ENCODE measurements at regions of chr3 and their contacts with region 1.

Region 1: DNA sequence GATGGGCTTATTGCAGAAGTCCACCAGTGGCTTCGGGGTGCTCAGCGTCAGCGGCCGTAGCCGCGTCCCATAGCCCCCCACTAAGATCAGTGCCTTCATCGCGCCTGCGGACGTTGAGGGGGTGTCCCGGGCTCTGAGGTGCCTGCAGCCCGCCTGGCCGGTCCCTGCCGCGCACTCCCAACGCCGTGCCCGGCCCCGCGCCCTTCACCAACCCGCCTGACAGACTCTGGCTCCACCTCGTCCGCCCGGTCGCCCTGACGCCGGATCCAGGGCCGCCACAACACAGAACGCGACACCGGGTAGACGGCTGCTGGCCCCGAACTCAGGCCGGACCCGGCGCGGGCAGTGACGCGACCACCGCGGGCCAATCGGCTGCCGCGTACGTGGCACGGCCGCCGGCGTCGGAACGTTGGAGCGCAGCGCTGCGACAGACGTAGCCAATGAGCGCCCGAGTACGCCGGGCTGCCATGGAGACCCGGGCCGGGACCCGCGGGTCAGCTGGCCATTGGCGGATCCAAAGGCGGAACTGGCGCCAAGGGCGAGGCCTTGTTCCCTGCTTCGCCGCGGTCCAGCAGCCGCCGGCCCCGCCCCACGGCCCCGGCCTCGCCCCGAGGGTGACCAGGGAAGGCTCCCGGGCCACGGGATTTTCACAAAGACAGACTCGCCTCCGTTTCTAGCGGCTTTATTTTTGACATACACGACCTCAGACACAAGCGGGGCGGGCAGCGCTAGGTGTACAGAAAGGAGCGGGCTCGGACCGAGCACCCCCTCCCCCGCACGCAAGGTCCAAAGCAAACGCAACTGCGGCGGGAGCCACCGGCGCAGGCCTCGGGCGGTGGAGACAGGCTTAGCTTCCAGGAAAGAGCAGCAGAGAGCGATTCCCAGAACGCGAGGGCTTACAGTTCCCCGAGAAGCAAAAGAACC is at the start of gene GMPPB:
- DNase-seq: peak; percentile 96
- ATAC-seq: peak; percentile 82
- H3K4me3 Mint-ChIP-seq: peak within 1 kb of the TSS; percentile 92
- H3K27ac Mint-ChIP-seq: peak within 1 kb of the TSS; percentile 97
- H3K4me1 Mint-ChIP-seq: peaks cover 21% of the 10 kb centered on the region
- H3K27me3 Mint-ChIP-seq: no peaks in the 10 kb centered on the region
- CTCF ChIP-seq: no peak
- total RNA-seq, gene GMPPB: 34.7 to 35.2 TPM

Region 2: DNA sequence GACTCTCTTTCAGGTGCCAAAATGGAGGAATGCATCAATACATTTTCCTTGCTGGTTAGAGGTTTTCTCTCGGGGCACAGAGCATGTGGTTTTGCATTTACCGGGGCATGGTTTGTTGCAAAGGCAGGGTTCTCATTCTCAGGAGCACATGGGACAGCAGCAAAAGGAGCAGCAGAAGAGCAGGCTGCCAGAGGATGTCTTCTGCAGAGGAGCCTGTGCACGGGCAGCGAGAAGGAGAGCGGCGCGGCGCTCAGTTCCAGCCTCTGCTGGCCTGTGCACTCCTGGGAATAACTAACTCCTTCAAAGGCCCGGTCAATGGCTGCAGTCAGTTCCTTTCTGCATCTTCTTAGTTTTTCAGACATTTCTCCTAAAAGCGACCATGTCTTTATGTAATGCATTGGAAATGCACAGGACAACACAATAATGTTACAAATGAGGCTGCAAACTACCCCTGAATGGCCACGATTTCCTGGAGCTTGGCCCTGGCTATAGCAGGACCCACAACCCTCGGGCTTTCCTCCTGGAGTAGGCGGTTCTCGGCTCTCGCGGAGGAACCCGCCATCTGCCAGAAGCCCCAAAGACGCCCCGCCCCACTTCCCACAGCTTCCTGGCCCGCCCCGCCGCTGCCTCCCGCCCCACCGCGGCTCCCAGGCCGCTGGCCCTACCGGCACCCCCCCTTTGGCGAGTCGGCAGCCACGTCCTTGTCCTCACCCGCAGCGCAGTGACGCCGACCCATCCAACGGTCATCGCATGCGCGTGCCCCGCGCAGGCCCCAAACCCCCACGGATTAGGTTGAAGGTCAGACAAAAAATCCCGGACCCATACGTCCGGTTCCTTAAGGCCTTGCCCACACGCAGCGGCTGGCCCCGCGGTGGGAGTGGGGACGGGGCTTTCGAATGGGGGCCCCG is 447.2 kb before region 1 on chr3 and contains the start of gene C3orf62:
- CTCF ChIA-PET with region 1: no interaction called
- POLR2A ChIA-PET with region 1: no interaction called
- intact Hi-C with region 1: no loop called
- DNase-seq: peak; percentile 86
- ATAC-seq: peak; percentile 88
- H3K4me3 Mint-ChIP-seq: peak within 1 kb of the TSS; percentile 78
- H3K27ac Mint-ChIP-seq: peak within 1 kb of the TSS; percentile 89
- H3K4me1 Mint-ChIP-seq: peaks cover 30% of the 10 kb centered on the region
- H3K27me3 Mint-ChIP-seq: no peaks in the 10 kb centered on the region
- CTCF ChIP-seq: no peak
- total RNA-seq, gene C3orf62: 3.4 to 3.7 TPM

Region 3: GRCh38 chr3:49327485-49327884 is 396.4 kb before region 1 on chr3:
- CTCF ChIA-PET with region 1: no interaction called
- POLR2A ChIA-PET with region 1: no interaction called
- intact Hi-C with region 1: no loop called
- DNase-seq: peak; percentile 9
- ATAC-seq: peak; percentile 27
- H3K4me3 Mint-ChIP-seq: no peak overlapping the region
- H3K27ac Mint-ChIP-seq: no peak overlapping the region
- H3K4me1 Mint-ChIP-seq: peaks cover 2% of the 10 kb centered on the region
- H3K27me3 Mint-ChIP-seq: no peaks in the 10 kb centered on the region
- CTCF ChIP-seq: no peak

Region 4: GRCh38 chr3:49703443-49703927 is 20.4 kb before region 1 on chr3:
- CTCF ChIA-PET with region 1: interaction called, 17 read pairs
- POLR2A ChIA-PET with region 1: interaction called, 40 read pairs
- intact Hi-C with region 1: no loop called
- DNase-seq: peak; percentile 74
- ATAC-seq: peak; percentile 99
- H3K4me3 Mint-ChIP-seq: no peak overlapping the region
- H3K27ac Mint-ChIP-seq: peak overlapping the region; percentile 11
- H3K4me1 Mint-ChIP-seq: no peaks in the 10 kb centered on the region
- H3K27me3 Mint-ChIP-seq: no peaks in the 10 kb centered on the region
- CTCF ChIP-seq: peak; percentile 80

Region 5: GRCh38 chr3:49712631-49713319 is 11.1 kb before region 1 on chr3:
- CTCF ChIA-PET with region 1: interaction called, 3 read pairs
- POLR2A ChIA-PET with region 1: interaction called, 15 read pairs
- intact Hi-C with region 1: no loop called
- DNase-seq: no peak
- ATAC-seq: no peak
- H3K4me3 Mint-ChIP-seq: no peak overlapping the region
- H3K27ac Mint-ChIP-seq: no peak overlapping the region
- H3K4me1 Mint-ChIP-seq: peaks cover 8% of the 10 kb centered on the region
- H3K27me3 Mint-ChIP-seq: no peaks in the 10 kb centered on the region
- CTCF ChIP-seq: no peak

Region 6: DNA sequence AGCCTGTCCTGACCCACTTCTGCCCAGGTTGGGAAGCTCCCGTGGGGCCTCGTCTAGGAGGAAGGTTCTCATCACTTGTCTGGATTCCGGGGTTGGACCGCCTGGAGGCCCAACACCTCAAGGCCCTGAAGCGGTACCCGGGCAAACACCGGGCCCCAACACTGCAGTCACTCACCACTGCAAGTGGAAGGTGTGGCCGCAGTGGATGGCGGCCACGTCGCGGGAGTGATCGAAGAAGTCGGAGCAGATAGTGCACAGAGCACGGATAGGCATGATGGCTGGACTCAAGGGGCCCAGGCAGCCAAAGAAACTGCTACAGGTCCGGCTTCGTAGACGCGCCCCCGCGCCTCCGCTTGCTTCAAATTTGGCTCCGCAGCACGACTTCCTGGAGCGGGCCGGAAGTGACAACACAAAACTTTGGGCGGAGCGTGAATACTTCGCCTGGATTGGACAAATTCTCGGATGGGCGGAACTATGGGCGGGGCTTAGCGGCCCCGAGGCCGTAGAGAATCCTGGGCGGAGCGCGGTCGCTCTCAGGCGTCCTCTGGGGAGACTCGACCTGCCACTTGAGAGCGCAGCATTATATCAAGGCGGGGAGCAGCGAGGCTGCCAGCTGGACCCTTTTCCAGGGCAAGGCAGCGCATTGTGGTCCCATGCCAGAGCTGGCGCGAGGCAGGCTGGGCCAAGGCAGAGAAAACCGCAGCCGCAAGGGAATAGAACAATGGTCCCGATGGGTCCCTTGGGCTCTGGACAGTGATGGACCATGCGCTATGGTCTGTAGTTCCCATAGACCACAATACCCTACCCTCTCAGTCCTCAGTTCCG is 132.5 kb after region 1 on chr3 and contains the start of gene TRAIP:
- CTCF ChIA-PET with region 1: no interaction called
- POLR2A ChIA-PET with region 1: no interaction called
- intact Hi-C with region 1: no loop called
- DNase-seq: peak; percentile 96
- ATAC-seq: peak; percentile 99
- H3K4me3 Mint-ChIP-seq: peak within 1 kb of the TSS; percentile 98
- H3K27ac Mint-ChIP-seq: peak within 1 kb of the TSS; percentile 88
- H3K4me1 Mint-ChIP-seq: peaks cover 12% of the 10 kb centered on the region
- H3K27me3 Mint-ChIP-seq: no peaks in the 10 kb centered on the region
- CTCF ChIP-seq: no peak
- total RNA-seq, gene TRAIP: 23.2 to 25.1 TPM

Measured in activated CD8-positive, alpha-beta T cell treated with anti-CD3 and anti-CD28 coated beads for 36 hours (primary cell).